ENCODE measurements at regions of chr11 and their contacts with region 1.

Region 1: DNA sequence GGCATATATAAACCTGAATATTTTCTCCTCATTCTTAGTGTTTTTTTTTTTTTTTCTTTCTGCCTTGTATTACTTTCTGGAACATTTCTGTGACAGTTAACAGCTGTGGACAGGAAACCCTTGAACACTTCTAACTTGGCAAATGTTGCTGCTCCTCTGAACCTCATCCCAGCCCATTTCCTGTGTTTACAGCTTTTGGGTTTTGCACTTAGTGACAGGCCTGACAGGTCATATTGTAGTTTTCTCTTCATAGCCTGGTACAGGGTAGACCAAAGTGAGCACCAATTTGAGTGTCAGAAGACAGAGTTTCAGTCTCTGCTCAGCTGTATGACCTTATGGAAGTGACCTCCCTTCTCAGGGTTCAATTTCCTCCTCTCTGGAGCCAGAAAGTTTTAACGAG is 91.6 kb downstream of the STIM1 start:
- DNase-seq: peak in 1 of 3 donors; percentile 41
- ATAC-seq: peak; percentile 86 to 90
- H3K4me3 ChIP-seq: no peak overlapping the region
- H3K27ac ChIP-seq: peak overlapping the region; percentile 81
- H3K4me1 ChIP-seq: peaks cover 19% of the 10 kb centered on the region
- H3K27me3 ChIP-seq: no peaks in the 10 kb centered on the region

Region 2: GRCh38 chr11:3854977-3855807 is 91.9 kb before region 1 on chr11 and contains the start of gene STIM1:
- intact Hi-C with region 1: loop called in 1 of 4 experiments (anchors 10 kb)
- DNase-seq: peak; percentile 95 to 98 (median 97)
- ATAC-seq: peak; percentile 95
- H3K4me3 ChIP-seq: peak within 1 kb of the TSS; percentile 88
- H3K27ac ChIP-seq: peak within 1 kb of the TSS; percentile 98
- H3K4me1 ChIP-seq: peaks cover 14% of the 10 kb centered on the region
- H3K27me3 ChIP-seq: no peaks in the 10 kb centered on the region
- total RNA-seq, gene STIM1: 14.4 to 19.3 (median 16.6) TPM

Region 3: DNA sequence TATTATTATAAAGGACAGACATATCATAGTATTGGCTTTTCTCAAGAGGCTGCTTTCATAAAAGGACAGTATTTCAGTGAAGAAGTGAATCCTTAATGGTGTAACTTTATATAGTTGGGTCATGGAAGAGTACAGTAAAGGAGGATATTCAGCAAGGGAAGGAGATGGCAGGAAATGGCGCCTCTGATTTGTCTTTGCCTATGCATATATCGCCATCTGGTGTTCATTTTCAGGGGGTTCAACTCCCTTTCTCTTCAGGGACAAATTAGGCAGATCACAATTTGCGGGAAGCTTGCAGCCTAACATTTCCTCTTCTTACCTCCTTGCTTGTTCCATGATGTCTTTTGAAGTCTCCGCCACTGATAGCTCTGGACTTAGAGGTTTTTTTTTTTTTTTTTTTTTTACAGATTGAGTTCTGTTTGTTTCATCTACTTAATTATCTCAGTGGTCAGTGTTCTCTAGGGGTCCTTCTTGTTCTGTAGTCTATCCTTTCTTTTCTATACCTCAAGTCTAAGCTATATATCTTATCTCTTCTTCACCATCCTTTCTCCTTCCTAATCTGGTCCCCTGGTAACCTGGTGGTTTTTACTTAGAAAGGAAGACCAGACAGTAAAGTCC is 125.7 kb after region 1 on chr11:
- intact Hi-C with region 1: loop called in 1 of 4 experiments (anchors 10 kb)
- DNase-seq: no peak
- ATAC-seq: peak; percentile 89
- H3K4me3 ChIP-seq: no peak overlapping the region
- H3K27ac ChIP-seq: no peak overlapping the region
- H3K4me1 ChIP-seq: no peaks in the 10 kb centered on the region
- H3K27me3 ChIP-seq: no peaks in the 10 kb centered on the region